Activated CD4-positive, alpha-beta T cell treated with anti-CD3 and anti-CD28 coated beads for 36 hours (primary cell): ENCODE measurements at regions of chr1 and their contacts with region 1.

Region 1: DNA sequence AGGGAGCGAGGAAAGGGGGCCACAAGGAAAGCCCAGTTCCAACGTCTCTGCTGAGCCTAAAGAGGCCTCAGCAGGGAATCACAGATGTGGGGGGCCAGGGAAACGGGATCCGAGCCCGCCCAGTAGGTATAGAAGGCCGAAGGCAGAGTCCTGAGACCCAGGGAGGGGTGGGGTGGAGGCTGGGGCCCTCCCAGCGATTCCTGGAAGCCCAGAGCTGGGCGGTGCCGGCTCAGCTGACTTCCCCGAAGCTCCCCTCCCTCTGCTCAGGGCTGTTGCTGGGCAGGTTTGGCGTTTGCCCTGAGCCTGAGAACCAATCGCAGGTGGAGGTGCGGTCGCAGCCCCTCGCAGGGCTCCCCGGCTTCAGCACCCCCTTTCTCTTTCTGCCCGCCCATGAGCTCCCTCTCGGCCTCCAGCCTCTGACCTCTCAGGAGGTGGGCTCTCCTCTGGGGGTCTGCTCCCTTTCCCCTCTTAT is 12.8 kb downstream of the ADAMTSL4 start:
- DNase-seq: peak; percentile 96
- ATAC-seq: peak; percentile 37
- H3K4me3 Mint-ChIP-seq: peak overlapping the region; percentile 81
- H3K27ac Mint-ChIP-seq: peak overlapping the region; percentile 99
- H3K4me1 Mint-ChIP-seq: peaks cover 57% of the 10 kb centered on the region
- H3K27me3 Mint-ChIP-seq: no peaks in the 10 kb centered on the region

Region 2: DNA sequence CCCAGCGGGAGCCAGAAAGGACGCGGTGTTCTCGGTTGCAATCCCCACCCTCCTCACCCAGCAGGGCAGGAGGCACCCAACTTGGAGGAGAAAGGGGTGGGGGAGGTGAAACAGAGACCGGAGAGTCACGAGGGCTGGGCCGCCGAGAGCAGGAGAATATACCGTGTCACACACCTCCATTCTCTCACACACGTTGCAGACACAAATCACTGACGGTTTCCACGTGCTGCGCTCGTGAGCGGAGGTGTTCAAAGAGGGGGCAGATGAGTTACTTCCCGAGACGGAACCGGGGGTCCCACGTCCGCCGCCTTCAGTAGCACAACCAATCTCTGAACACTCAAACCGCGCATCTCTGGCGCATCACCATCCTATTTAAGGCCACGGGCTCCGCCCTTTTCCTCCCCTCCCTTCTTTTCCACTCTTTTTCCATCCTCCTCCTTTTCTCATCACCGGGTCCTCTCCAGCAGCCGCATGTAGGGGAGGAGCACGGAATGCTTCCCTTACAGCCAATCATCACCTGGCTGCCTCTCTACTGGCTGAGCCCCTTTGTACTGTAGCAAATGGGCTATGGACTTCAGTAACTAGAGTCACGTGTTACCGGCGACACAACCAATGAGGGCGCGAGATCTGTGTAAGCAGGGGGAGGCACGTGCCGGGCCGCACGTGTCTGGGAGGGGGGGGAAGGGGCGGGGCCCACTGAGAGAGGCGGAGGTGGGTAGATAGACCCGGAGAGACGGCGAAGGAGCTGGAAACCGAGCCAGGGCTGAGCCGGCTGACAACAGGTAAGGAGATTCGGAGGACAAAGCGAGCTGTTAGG is 280.0 kb before region 1 on chr1 and contains the start of gene CIART:
- CTCF ChIA-PET with region 1: no interaction called
- POLR2A ChIA-PET with region 1: no interaction called
- intact Hi-C with region 1: no loop called
- DNase-seq: peak; percentile 89
- ATAC-seq: peak; percentile 96
- H3K4me3 Mint-ChIP-seq: peak within 1 kb of the TSS; percentile 77
- H3K27ac Mint-ChIP-seq: peak within 1 kb of the TSS; percentile 92
- H3K4me1 Mint-ChIP-seq: peaks cover 29% of the 10 kb centered on the region
- H3K27me3 Mint-ChIP-seq: no peaks in the 10 kb centered on the region
- total RNA-seq, gene CIART: 5.9 to 6.0 TPM

Region 3: DNA sequence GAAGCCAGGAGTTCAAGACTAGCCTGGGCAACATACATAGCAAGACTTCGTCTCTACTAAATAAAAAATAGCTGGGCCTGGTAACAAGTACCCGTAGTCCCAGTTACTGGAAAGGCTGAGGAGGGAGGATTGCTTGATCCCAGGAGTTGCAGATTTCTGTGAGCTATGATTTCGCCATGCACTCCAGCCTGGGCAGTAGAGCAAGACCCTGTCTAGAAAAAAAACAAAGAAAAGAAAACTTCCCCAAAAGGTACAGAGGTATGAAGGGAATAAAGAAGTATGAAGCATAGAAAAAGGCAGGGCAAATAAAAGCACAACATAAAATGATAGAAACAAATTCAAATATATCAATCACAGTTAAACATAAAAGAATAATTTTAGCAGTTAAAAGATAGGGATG is 169.4 kb before region 1 on chr1:
- CTCF ChIA-PET with region 1: no interaction called
- POLR2A ChIA-PET with region 1: no interaction called
- intact Hi-C with region 1: no loop called
- DNase-seq: no peak
- ATAC-seq: no peak
- H3K4me3 Mint-ChIP-seq: no peak overlapping the region
- H3K27ac Mint-ChIP-seq: no peak overlapping the region
- H3K4me1 Mint-ChIP-seq: peaks cover 38% of the 10 kb centered on the region
- H3K27me3 Mint-ChIP-seq: no peaks in the 10 kb centered on the region

Region 4: GRCh38 chr1:150486964-150487762 is 74.8 kb before region 1 on chr1 and contains the start of gene TARS2:
- CTCF ChIA-PET with region 1: interaction called, 3 read pairs
- POLR2A ChIA-PET with region 1: no interaction called
- intact Hi-C with region 1: loop called (anchors 1 to 5 kb)
- DNase-seq: peak; percentile 96
- ATAC-seq: peak; percentile 100
- H3K4me3 Mint-ChIP-seq: peak within 1 kb of the TSS; percentile 96
- H3K27ac Mint-ChIP-seq: peak within 1 kb of the TSS; percentile 99
- H3K4me1 Mint-ChIP-seq: peaks cover 13% of the 10 kb centered on the region
- H3K27me3 Mint-ChIP-seq: no peaks in the 10 kb centered on the region
- total RNA-seq, gene TARS2: 43.8 to 58.6 TPM

Region 5: DNA sequence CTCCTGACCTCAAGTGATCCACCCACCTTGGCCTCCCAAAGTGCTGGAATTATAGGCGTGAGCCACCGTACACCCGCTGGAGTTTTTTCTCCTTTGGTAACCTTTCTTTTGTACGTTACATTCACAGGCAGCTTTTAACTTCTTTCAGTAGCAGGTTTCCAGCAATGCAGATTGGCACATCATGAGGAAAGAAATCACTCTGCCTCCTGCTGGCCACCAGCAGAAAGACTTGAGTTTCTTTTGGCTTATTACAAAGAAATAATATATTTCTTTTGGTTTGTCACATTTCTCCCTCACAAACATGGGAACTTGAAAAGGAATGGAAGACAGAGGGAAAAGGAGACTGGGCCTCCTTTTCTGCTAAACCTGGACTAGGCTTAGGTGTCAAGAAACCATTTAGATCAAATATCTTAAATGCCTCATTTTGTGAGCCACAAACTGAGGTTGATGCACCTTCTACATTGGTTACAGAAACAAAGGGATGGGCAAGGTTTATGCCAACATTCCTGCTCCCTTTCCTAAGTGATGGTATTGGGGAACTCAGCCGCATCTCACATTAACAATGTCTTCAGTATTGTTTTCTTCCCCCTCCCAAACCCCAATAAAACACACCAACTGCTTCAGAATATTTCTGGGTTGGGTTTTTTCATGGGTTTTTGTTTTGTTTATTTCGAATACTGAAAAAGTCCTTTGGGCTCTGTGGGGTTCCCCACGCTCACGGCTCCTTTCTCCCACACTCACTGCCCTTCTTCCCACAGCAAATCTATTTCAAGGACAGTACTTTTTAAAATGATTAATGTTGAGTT is 59.7 kb after region 1 on chr1:
- CTCF ChIA-PET with region 1: interaction called, 461 read pairs
- POLR2A ChIA-PET with region 1: interaction called, 83 read pairs
- intact Hi-C with region 1: loop called (anchors 1 kb)
- DNase-seq: peak; percentile 77
- ATAC-seq: peak; percentile 30
- H3K4me3 Mint-ChIP-seq: peak overlapping the region; percentile 39
- H3K27ac Mint-ChIP-seq: peak overlapping the region; percentile 88
- H3K4me1 Mint-ChIP-seq: peaks cover 78% of the 10 kb centered on the region
- H3K27me3 Mint-ChIP-seq: no peaks in the 10 kb centered on the region

Region 6: DNA sequence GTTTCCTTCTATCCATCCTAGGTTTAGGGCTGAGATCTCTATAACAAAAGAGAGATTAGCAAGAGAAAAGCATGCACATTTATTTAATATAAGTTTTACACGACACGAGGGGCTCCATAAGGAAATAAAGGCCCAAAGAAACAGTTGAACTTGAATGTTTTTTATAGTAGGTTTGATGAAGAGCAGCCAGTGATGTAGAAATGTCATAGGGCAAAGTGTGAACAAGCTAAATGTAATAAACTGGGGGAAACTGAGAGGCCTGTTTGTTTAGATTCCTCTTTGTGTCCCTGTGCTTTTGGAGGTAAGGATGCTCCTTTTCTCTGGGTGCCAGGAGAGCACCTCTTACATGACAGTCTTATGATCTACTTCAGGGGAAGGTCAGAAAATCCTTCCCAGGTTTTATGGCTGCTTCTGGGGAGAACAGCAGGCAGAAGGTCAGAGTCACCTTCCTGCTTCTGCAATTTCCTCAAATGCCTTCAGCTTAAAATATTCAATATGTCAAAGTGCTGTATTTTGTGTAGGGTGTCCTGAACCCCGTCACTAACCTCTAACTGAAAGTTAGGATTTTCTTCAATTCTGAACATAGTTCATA is 168.2 kb after region 1 on chr1:
- CTCF ChIA-PET with region 1: no interaction called
- POLR2A ChIA-PET with region 1: no interaction called
- intact Hi-C with region 1: no loop called
- DNase-seq: no peak
- ATAC-seq: no peak
- H3K4me3 Mint-ChIP-seq: no peak overlapping the region
- H3K27ac Mint-ChIP-seq: no peak overlapping the region
- H3K4me1 Mint-ChIP-seq: no peaks in the 10 kb centered on the region
- H3K27me3 Mint-ChIP-seq: no peaks in the 10 kb centered on the region

Region 7: DNA sequence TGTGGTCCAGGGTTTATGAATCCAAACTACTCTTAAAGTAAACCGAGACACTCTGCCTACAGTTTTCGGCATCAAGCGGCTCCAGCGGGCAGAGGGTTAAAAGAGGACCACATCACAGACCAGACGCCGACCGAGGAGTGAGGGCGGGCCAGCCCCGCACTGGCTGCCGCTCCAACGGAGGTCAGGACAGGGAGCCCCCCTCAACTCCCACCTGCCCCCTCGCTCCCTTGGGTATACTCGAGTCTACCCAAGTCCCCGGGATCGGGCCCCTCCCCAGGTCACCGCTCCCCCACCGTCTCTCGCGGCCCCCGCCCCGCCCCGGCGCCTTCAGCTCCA is 314.1 kb after region 1 on chr1:
- CTCF ChIA-PET with region 1: no interaction called
- POLR2A ChIA-PET with region 1: no interaction called
- intact Hi-C with region 1: loop called (anchors 2 to 5 kb)
- DNase-seq: no peak
- ATAC-seq: peak; percentile 37
- H3K4me3 Mint-ChIP-seq: peak overlapping the region; percentile 88
- H3K27ac Mint-ChIP-seq: peak overlapping the region; percentile 95
- H3K4me1 Mint-ChIP-seq: peaks cover 25% of the 10 kb centered on the region
- H3K27me3 Mint-ChIP-seq: no peaks in the 10 kb centered on the region

Region 8: GRCh38 chr1:151059078-151059907 is 497.3 kb after region 1 on chr1 and contains the start of gene CDC42SE1:
- CTCF ChIA-PET with region 1: interaction called, 3 read pairs
- POLR2A ChIA-PET with region 1: no interaction called
- intact Hi-C with region 1: loop called in 1 of 2 experiments (anchors 5 kb)
- DNase-seq: peak; percentile 92
- ATAC-seq: peak; percentile 75
- H3K4me3 Mint-ChIP-seq: peak within 1 kb of the TSS; percentile 93
- H3K27ac Mint-ChIP-seq: peak within 1 kb of the TSS; percentile 98
- H3K4me1 Mint-ChIP-seq: peaks cover 54% of the 10 kb centered on the region
- H3K27me3 Mint-ChIP-seq: no peaks in the 10 kb centered on the region
- total RNA-seq, gene CDC42SE1: 95.4 to 101 TPM

Region 9: DNA sequence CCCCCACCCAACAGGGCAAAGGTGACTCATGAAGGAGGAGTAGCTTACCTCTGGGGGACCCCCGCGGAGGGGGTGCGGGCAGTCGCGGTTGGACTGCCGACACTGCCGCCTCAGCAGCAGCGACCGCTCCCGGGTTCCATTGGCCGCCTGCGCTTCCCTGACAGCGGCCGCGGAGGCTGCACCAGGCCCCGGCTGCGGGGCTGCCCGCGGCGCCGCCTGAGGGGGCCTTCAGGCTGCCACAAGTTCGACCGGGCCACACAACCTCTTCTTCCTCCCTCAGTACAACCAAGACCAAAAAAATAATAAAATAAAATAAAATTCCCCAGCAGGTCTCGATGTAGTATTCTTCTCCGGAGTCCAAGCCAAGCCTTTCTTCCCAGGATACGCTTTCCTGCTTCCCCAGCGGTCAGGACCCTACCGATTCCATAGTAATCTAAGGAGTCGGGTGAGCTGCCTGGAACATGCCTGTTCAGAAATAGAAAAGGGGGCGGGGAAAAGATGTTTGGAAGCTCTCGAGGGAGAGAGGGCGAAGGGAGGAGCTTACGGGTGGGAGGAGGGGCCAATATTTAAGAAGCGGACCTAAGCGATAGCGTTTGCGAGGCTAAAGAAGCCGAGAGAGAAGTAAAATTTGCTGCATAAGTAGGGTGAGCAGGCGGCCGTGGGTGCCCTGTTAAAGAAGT is 765.4 kb after region 1 on chr1 and contains the start of gene PI4KB:
- CTCF ChIA-PET with region 1: no interaction called
- POLR2A ChIA-PET with region 1: no interaction called
- intact Hi-C with region 1: loop called in 1 of 2 experiments (anchors 5 kb)
- DNase-seq: peak; percentile 92
- ATAC-seq: peak; percentile 94
- H3K4me3 Mint-ChIP-seq: peak within 1 kb of the TSS; percentile 92
- H3K27ac Mint-ChIP-seq: peak within 1 kb of the TSS; percentile 95
- H3K4me1 Mint-ChIP-seq: peaks cover 30% of the 10 kb centered on the region
- H3K27me3 Mint-ChIP-seq: no peaks in the 10 kb centered on the region
- total RNA-seq, gene PI4KB: 53.0 to 54.5 TPM